Right cardiac atrium (tissue), 5 donors: ENCODE measurements at regions of chr11 and their contacts with region 1.

Region 1: DNA sequence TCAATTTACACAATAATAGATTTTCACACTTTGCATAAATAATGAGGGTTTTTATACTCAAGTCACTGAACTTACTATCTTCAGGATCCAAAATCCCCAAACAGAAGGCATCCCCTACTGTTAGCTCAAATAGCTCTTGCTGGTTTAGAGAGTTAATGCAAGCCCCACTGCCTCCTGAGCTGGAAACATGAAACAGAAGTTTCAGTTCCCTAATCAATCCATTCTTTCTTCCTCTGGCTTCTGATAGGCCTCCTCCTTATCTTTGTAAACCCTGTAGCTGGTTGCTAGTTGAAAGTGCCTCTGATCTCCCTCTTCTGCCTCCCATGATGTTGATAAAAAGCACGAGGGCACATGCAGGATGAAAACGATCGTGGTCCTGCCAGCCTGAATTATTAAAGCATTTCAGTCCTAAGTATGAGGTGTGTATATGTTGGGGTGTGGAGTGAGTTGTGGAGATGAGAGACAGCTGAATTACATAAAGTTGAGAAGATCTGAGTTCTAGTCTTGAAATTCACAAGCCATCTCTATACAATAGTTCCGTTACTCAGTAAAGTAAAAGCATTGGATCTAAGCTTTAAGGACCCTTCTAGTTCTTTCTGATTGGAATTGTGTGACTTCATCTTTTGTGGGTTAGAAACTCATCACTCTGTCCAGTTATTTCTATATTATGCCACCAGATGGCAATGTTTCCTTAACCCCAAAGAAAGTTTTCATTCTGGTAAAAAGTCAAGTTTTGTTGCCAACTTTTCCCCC is 35.0 kb upstream of the EHF start:
- DNase-seq: no peak
- ATAC-seq: peak; percentile 36 to 53
- H3K4me3 ChIP-seq: no peak overlapping the region
- H3K27ac ChIP-seq: no peak overlapping the region
- H3K4me1 ChIP-seq: no peaks in the 10 kb centered on the region
- H3K27me3 ChIP-seq: no peaks in the 10 kb centered on the region

Region 2: DNA sequence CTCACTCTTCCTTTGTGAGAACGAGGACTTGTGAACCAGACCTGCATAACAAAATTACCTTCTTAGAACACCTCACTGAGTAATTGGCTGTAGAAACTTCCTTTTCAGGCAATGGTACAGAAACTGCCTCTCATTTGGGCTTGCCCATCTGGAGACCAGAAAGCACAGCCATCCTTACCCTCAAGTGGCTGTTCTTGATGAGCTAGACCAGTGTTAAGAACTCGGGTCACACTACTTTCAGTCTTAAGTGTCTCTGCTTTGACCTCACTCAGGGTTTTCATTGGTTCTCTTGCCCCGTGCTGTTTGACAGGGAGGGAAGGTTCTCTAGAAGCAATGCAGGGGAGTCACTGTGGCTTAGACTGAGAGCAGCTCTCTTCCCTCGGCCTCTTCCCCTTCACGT is 451.1 kb before region 1 on chr11:
- intact Hi-C with region 1: no loop called
- DNase-seq: no peak
- ATAC-seq: no peak
- H3K4me3 ChIP-seq: no peak overlapping the region
- H3K27ac ChIP-seq: no peak overlapping the region
- H3K4me1 ChIP-seq: no peaks in the 10 kb centered on the region
- H3K27me3 ChIP-seq: no peaks in the 10 kb centered on the region

Region 3: DNA sequence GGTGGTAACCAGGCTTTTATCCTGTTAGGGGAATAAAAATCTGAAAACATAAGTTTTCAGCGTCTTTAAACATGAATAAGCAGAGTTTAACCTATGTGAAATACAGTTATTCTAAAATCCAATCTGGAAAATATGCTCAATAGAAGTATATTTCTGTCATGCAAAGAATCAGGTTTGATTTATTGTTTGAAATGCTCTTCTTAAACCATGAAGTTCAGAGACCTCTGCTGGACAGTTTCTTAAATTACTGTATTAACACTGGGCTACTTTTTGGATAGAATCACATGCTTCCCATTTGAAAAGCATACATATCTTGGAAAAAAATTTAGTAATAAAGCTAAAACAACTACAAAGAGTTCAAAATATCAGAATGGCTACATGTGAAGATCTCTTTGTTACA is 304.9 kb after region 1 on chr11:
- intact Hi-C with region 1: loop called (anchors 5 kb)
- DNase-seq: no peak
- ATAC-seq: no peak
- H3K4me3 ChIP-seq: no peak overlapping the region
- H3K27ac ChIP-seq: no peak overlapping the region
- H3K4me1 ChIP-seq: no peaks in the 10 kb centered on the region
- H3K27me3 ChIP-seq: no peaks in the 10 kb centered on the region

Region 4: DNA sequence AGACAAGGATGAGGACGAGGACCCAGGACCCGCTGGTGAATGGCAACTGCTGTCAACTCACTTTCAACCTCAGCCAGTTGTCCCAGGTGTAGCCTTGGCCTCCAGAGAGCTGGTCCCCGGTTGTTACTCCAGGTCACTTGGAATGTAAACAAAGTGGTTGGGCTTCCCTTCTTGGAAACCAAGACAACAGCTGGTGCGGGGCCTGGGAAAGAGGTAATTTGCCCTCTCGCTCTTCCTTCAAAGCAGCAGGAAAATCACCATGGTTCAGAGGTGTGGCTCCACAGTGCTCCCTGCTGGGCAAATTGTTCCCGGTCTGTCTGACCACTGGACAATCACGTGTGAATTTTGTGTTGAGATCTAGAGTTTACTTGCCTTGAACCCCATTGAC is 818.5 kb after region 1 on chr11:
- intact Hi-C with region 1: loop called in 1 of 4 experiments (anchors 10 kb)
- DNase-seq: peak in 2 of 3 donors; percentile 22 to 48
- ATAC-seq: no peak
- H3K4me3 ChIP-seq: no peak overlapping the region
- H3K27ac ChIP-seq: no peak overlapping the region
- H3K4me1 ChIP-seq: no peaks in the 10 kb centered on the region
- H3K27me3 ChIP-seq: no peaks in the 10 kb centered on the region